Heart left ventricle (tissue), 16 donors: ENCODE measurements at regions of chr19 and their contacts with region 1.

Region 1: GRCh38 chr19:40403262-40403984 is 9.8 kb downstream of the PRX start:
- DNase-seq: peak; percentile 92 to 95 (median 93)
- ATAC-seq: peak; percentile 81 to 95 (median 90)
- H3K4me3 ChIP-seq: peak overlapping the region; percentile 32 to 81 (median 64)
- H3K27ac ChIP-seq: peak overlapping the region; percentile 80 to 93 (median 88)
- H3K4me1 ChIP-seq: peaks cover 0 to 26% (median 9%) of the 10 kb centered on the region in 12 donors
- H3K27me3 ChIP-seq: no peaks in the 10 kb centered on the region
- CTCF ChIP-seq: peak in 3 of 12 donors; percentile 10 to 28 (median 12)
- POLR2A ChIP-seq: no peak

Region 2: GRCh38 chr19:40348125-40348913 is 55.1 kb before region 1 on chr19 and contains the starts of genes C19orf47 and PLD3:
- intact Hi-C with region 1: loop called in 4 of 10 experiments (anchors 2 to 5 kb)
- DNase-seq: peak; percentile 100
- ATAC-seq: peak; percentile 97 to 98 (median 98)
- H3K4me3 ChIP-seq: peak within 1 kb of the TSS; percentile 59 to 98 (median 82)
- H3K27ac ChIP-seq: peak within 1 kb of the TSS; percentile 67 to 88 (median 84)
- H3K4me1 ChIP-seq: peaks cover 0 to 34% (median 20%) of the 10 kb centered on the region in 12 donors
- H3K27me3 ChIP-seq: no peaks in the 10 kb centered on the region
- CTCF ChIP-seq: no peak
- POLR2A ChIP-seq: peak in 1 of 2 donors; percentile 86
- total RNA-seq, gene C19orf47: 99.1 to 230 (median 148) TPM
- total RNA-seq, gene PLD3: 138 to 375 (median 183) TPM

Region 3: DNA sequence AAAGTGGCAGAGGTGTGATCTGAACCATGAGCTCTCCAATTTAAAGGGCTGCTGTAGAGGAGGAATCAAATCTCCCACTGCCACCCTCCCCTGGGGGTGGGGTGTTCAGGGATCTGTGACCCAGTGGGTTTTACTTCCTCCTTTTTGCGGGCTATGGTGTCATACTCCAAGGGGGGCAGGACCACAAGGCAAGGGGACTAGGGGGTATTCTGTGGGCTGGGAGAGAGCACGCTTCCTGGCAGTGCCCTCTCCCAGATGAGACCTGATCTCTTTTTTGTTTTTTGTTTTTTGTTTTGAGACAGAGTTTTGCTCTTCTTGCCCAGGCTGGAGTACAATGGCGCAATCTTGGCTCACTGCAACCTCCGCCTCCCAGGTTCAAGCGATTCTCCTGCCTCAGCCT is 44.6 kb before region 1 on chr19:
- intact Hi-C with region 1: loop called in 3 of 10 experiments (anchors 5 kb)
- DNase-seq: peak in 2 of 5 donors; percentile 31 to 56
- ATAC-seq: peak in 3 of 4 donors; percentile 36 to 71 (median 51)
- H3K4me3 ChIP-seq: no peak overlapping the region
- H3K27ac ChIP-seq: peak overlapping the region in 1 of 12 donors; percentile 25
- H3K4me1 ChIP-seq: peaks cover 0 to 62% (median 0%) of the 10 kb centered on the region in 12 donors
- H3K27me3 ChIP-seq: no peaks in the 10 kb centered on the region
- CTCF ChIP-seq: no peak
- POLR2A ChIP-seq: no peak

Region 4: DNA sequence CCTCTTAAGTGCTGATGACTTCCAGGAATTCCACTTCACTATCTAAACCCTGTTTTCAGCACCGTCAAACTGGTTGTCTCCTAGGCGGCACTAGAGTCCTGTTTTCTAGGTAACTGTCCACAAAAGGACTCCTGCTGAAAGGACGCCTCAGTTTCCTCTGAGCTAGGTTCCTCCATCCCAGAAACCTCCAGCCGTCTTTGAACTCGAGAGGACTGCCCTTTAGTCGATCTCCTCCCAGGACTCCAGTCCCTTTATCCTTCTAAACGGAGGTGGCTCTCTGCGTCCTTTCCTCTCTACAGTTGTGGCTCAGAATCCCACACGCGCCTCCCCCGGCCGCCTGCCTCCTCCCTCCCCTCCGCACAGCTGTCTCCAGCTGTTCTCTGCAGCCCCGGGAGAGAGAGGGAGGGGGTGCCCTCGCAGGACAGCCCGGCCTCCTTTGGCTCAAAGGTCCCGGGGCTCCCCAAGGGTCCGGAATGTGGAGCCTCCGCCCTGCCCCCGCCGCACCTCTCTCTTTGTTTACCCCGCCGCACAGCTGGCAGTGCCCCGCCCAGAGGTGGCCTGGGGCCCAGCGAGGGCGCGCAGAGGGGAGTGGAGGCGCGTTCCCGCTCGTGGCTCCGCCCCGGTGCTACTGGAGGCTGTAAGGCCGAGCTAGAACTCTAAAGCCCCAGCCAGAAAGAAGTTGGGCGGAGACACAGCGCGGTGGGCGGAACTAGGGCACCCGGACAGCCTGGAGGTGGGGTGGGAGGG is 200.1 kb after region 1 on chr19:
- intact Hi-C with region 1: no loop called
- DNase-seq: peak; percentile 97 to 98 (median 98)
- ATAC-seq: peak; percentile 77 to 86 (median 84)
- H3K4me3 ChIP-seq: peak overlapping the region; percentile 7 to 96 (median 68)
- H3K27ac ChIP-seq: peak overlapping the region; percentile 67 to 97 (median 86)
- H3K4me1 ChIP-seq: peaks cover 0 to 81% (median 66%) of the 10 kb centered on the region in 12 donors
- H3K27me3 ChIP-seq: peaks cover 0 to 32% (median 0%) of the 10 kb centered on the region in 9 donors
- CTCF ChIP-seq: peak in 1 of 12 donors; percentile 4
- POLR2A ChIP-seq: peak; percentile 62 to 88